ENCODE measurements at regions of chr1 and their contacts with region 1.

Region 1: DNA sequence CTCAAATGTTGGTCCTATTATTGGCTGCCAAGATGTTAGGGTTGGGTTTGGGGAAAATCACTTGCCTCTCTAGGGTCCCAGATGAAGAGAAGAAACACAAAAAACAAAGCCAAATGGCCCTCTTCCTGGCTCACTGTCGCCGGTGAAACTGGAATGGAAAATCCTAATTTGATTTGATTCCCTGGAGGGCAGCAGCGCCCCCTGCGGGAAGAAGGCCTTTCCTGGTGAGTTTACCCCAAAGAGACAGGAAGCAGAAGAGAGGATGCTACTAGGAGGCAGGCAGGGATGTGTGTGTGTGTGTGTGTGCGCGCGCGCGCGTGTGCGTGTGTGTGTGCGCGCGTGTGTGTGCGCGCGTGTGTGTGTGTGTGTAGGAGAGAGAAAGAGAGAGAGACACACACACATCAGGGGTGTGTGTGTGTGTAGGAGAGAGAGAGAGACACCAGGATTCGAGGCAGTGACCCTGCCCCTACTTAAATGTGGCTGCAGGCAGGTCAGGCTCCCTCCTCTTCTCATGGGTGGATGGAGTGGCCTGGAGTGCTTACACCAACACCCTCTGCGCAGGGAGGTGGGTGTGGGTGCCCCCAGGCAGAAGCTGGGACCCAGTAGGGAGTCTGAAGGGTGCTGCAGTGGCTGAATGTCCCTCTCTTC is 3.1 kb upstream of the SELENON start:
- DNase-seq: peak; percentile 81 to 85 (median 85)
- H3K4me3 ChIP-seq: no peak overlapping the region
- H3K27ac ChIP-seq: no peak overlapping the region
- H3K4me1 ChIP-seq: peaks cover 0 to 29% (median 22%) of the 10 kb centered on the region in 4 experiments
- H3K27me3 ChIP-seq: no peaks in the 10 kb centered on the region

Region 2: DNA sequence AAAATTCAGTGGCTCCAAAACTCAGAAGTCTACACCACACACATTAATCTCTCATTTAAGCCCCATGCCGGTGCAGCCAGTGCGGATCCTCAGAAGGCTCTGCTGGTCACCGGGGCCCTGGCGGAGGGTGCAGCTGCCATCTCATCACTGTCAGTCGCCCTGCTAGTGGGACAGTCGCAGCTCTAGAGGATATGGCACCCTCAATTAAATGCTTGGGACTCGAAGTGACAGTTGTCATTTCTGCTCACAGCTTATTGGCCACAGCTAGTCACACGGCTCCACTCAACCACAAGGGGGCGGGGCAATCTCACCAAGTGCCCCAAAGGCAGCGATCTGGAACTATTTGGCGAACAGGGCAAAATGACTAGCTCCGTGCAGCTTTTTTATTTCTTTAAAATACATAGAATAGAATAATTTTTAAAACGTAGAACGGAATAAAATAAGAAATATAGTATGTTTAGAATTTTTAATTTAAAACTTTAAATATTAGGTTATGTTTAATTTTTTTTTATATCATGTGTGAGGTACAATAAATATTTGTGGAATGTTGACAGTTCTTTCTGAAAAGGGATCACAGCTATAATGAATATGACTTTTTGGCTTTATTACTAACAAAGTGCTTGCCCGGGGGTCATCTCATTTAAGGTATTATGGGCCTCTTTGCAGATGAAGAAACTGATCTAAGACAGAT is 188.3 kb before region 1 on chr1:
- CTCF ChIA-PET with region 1: interaction called, 24 read pairs
- POLR2A ChIA-PET with region 1: no interaction called
- DNase-seq: peak; percentile 82 to 92 (median 90)
- H3K4me3 ChIP-seq: peak overlapping the region in 2 of 7 experiments; percentile 50 to 61
- H3K27ac ChIP-seq: no peak overlapping the region
- H3K4me1 ChIP-seq: peaks cover 0 to 4% (median 3%) of the 10 kb centered on the region in 4 experiments
- H3K27me3 ChIP-seq: peaks cover 0 to 6% (median 0%) of the 10 kb centered on the region in 5 experiments

Region 3: GRCh38 chr1:25754470-25755181 is 42.3 kb before region 1 on chr1:
- CTCF ChIA-PET with region 1: interaction called, 15 read pairs
- POLR2A ChIA-PET with region 1: no interaction called
- DNase-seq: peak in 2 of 3 donors; percentile 72 to 73
- H3K4me3 ChIP-seq: peak overlapping the region in 1 of 7 experiments; percentile 4
- H3K27ac ChIP-seq: no peak overlapping the region
- H3K4me1 ChIP-seq: peaks cover 3 to 43% (median 40%) of the 10 kb centered on the region in 4 experiments
- H3K27me3 ChIP-seq: no peaks in the 10 kb centered on the region

Region 4: GRCh38 chr1:25810341-25811299 is 13.7 kb after region 1 on chr1:
- CTCF ChIA-PET with region 1: interaction called, 13 read pairs
- POLR2A ChIA-PET with region 1: no interaction called
- DNase-seq: peak; percentile 50 to 70 (median 58)
- H3K4me3 ChIP-seq: no peak overlapping the region
- H3K27ac ChIP-seq: no peak overlapping the region
- H3K4me1 ChIP-seq: peaks cover 0 to 21% (median 13%) of the 10 kb centered on the region in 4 experiments
- H3K27me3 ChIP-seq: no peaks in the 10 kb centered on the region

Region 5: DNA sequence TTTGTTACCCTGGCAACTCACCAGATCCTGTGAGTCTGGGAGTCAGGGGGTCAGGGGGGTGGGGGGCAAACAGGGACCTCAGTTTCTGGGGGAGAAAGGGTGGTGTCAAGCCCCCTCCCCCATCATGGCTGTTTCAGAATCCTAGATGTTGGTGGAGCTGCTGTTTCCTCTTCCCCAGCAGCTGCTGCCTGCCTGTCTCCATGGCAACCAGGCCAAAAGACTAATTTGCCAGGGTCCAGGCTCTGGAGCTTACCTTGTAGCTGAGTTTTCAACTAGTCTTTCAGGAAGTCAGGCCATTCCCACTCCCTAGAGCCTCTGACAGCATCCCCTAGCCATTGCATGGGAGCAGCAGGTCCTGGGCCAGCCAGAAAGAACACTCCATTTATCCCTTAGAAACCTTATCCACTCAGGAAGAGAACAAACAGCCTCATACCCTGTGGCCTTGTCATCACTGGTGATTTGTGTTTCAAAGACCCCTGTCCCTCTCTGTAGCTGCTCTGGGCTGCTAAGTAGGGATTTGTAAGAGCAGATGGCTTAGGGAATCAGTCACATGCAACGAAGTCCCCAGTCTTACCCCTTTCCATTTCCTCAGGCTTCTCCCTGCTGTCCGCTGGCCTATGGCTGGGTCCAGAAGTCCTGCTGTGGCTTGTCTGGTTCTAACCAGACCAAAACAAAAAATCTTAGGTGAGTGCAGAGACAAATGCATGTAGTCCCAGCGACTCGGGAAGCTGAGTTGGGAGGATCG is 130.8 kb after region 1 on chr1:
- CTCF ChIA-PET with region 1: no interaction called
- POLR2A ChIA-PET with region 1: no interaction called
- DNase-seq: peak; percentile 29 to 90 (median 89)
- H3K4me3 ChIP-seq: no peak overlapping the region
- H3K27ac ChIP-seq: no peak overlapping the region
- H3K4me1 ChIP-seq: peaks cover 6 to 38% (median 25%) of the 10 kb centered on the region in 4 experiments
- H3K27me3 ChIP-seq: no peaks in the 10 kb centered on the region

Region 6: GRCh38 chr1:25952841-25953401 is 156.0 kb after region 1 on chr1:
- CTCF ChIA-PET with region 1: no interaction called
- POLR2A ChIA-PET with region 1: no interaction called
- DNase-seq: no peak
- H3K4me3 ChIP-seq: no peak overlapping the region
- H3K27ac ChIP-seq: no peak overlapping the region
- H3K4me1 ChIP-seq: peaks cover 0 to 4% (median 0%) of the 10 kb centered on the region in 4 experiments
- H3K27me3 ChIP-seq: no peaks in the 10 kb centered on the region